Activated CD4-positive, alpha-beta memory T cell treated with anti-CD3 and anti-CD28 coated beads for 36 hours (primary cell): ENCODE measurements at regions of chr7 and their contacts with region 1.

Region 1: DNA sequence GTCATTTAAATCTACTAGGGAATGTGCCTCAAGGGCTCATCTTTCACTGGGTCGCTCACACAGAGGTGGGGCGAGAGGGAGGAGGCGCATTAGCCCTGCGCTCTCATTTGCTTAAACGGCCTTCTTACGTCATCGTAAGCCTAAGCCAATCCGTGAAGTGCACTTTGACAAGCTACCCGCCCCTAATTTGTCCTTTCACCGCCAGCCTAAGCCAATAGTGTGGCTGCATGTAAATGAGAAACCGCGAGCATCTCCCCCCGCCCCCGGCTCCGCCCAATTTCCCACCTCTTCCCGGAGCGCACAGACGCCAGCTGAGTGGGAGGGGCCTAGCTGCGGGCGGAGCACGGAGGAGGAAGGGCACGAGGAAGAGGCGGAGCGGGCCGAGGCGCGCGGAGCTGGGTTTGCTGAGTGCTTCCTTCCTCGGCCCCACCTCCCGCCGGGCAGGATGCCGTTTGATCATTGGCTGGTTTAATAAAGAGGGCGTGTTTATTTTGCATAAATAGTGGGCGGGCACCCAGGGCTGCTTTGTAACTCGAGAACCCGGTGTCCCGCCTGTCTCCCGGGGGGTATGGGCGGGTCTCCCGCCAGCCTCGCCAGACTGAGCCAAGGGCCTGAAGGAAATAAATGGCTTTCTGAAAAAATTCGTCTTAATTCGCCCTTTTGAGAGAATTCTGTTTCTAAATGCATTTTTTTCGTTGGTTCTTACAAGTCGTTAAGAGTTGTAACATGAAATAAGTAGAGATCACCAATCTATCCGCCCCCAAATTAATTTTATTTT is 289.5 kb upstream of the NFE2L3 start:
- DNase-seq: peak; percentile 98
- H3K4me3 Mint-ChIP-seq: peak overlapping the region; percentile 65
- H3K27ac Mint-ChIP-seq: peak overlapping the region; percentile 60
- H3K4me1 Mint-ChIP-seq: peaks cover 22% of the 10 kb centered on the region
- H3K27me3 Mint-ChIP-seq: peaks cover 69% of the 10 kb centered on the region

Region 2: GRCh38 chr7:25803117-25803887 is 59.1 kb before region 1 on chr7:
- CTCF ChIA-PET with region 1: no interaction called
- POLR2A ChIA-PET with region 1: no interaction called
- intact Hi-C with region 1: loop called (anchors 1 kb)
- DNase-seq: peak; percentile 34
- H3K4me3 Mint-ChIP-seq: no peak overlapping the region
- H3K27ac Mint-ChIP-seq: no peak overlapping the region
- H3K4me1 Mint-ChIP-seq: peaks cover 21% of the 10 kb centered on the region
- H3K27me3 Mint-ChIP-seq: peaks cover 7% of the 10 kb centered on the region

Region 3: GRCh38 chr7:25968205-25968993 is 106.0 kb after region 1 on chr7:
- CTCF ChIA-PET with region 1: no interaction called
- POLR2A ChIA-PET with region 1: no interaction called
- intact Hi-C with region 1: loop called (anchors 1 kb)
- DNase-seq: peak; percentile 87
- H3K4me3 Mint-ChIP-seq: peak overlapping the region; percentile 7
- H3K27ac Mint-ChIP-seq: peak overlapping the region; percentile 55
- H3K4me1 Mint-ChIP-seq: peaks cover 23% of the 10 kb centered on the region
- H3K27me3 Mint-ChIP-seq: peaks cover 31% of the 10 kb centered on the region

Region 4: GRCh38 chr7:26398756-26399501 is 536.5 kb after region 1 on chr7:
- CTCF ChIA-PET with region 1: no interaction called
- POLR2A ChIA-PET with region 1: no interaction called
- intact Hi-C with region 1: loop called (anchors 1 kb)
- DNase-seq: peak; percentile 70
- H3K4me3 Mint-ChIP-seq: peak overlapping the region; percentile 86
- H3K27ac Mint-ChIP-seq: peak overlapping the region; percentile 64
- H3K4me1 Mint-ChIP-seq: peaks cover 13% of the 10 kb centered on the region
- H3K27me3 Mint-ChIP-seq: peaks cover 41% of the 10 kb centered on the region

Region 5: GRCh38 chr7:27095897-27096767 is 1233.7 kb after region 1 on chr7 and contains the start of gene HOXA1:
- CTCF ChIA-PET with region 1: no interaction called
- POLR2A ChIA-PET with region 1: no interaction called
- intact Hi-C with region 1: loop called (anchors 5 kb)
- DNase-seq: peak; percentile 85
- H3K4me3 Mint-ChIP-seq: peak within 1 kb of the TSS; percentile 66
- H3K27ac Mint-ChIP-seq: no peak within 1 kb of the TSS
- H3K4me1 Mint-ChIP-seq: peaks cover 15% of the 10 kb centered on the region
- H3K27me3 Mint-ChIP-seq: peaks cover 62% of the 10 kb centered on the region
- total RNA-seq, gene HOXA1: 0.29 to 0.43 TPM